ENCODE measurements at regions of chr1 and their contacts with region 1.

Region 1: DNA sequence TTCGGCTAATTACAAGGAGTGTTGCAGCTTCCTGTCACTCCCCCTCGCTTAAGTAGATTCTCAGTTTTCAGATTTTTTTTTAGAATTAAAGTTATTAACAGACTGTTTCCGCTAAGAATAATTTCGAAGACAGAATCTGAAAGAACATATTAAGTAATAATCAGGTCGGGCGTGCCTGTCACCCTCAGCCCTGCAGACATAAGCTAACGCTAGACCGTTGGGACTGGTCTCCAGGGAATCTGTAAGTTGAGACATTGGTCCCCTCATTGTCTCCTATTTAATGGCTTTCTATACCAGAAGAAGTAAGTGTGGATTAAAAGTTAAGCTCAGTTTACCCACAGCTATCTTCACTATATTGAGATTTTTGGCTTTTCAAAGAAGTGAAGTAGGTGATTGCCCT is 14.5 kb downstream of the NMNAT1 start:
- DNase-seq: no peak
- ATAC-seq: no peak
- H3K4me3 ChIP-seq: no peak overlapping the region
- H3K27ac ChIP-seq: no peak overlapping the region
- H3K4me1 ChIP-seq: no peaks in the 10 kb centered on the region
- H3K27me3 ChIP-seq: no peaks in the 10 kb centered on the region
- CTCF ChIP-seq: no peak

Region 2: GRCh38 chr1:9922342-9922741 is 35.4 kb before region 1 on chr1:
- CTCF ChIA-PET with region 1: no interaction called
- POLR2A ChIA-PET with region 1: no interaction called
- intact Hi-C with region 1: no loop called
- DNase-seq: no peak
- ATAC-seq: no peak
- H3K4me3 ChIP-seq: no peak overlapping the region
- H3K27ac ChIP-seq: no peak overlapping the region
- H3K4me1 ChIP-seq: no peaks in the 10 kb centered on the region
- H3K27me3 ChIP-seq: no peaks in the 10 kb centered on the region
- CTCF ChIP-seq: no peak

Region 3: GRCh38 chr1:10338047-10338446 is 380.3 kb after region 1 on chr1:
- CTCF ChIA-PET with region 1: interaction called, 4 read pairs
- POLR2A ChIA-PET with region 1: no interaction called
- intact Hi-C with region 1: loop called (anchors 10 kb)
- DNase-seq: peak; percentile 40
- ATAC-seq: peak; percentile 96
- H3K4me3 ChIP-seq: no peak overlapping the region
- H3K27ac ChIP-seq: no peak overlapping the region
- H3K4me1 ChIP-seq: 0 out of 2 replicates have a peak, but pooled peaks cover 3% of the 10 kb centered on the region
- H3K27me3 ChIP-seq: no peaks in the 10 kb centered on the region
- CTCF ChIP-seq: peak; percentile 86